Activated CD4-positive, alpha-beta T cell treated with anti-CD3 and anti-CD28 coated beads for 36 hours (primary cell): ENCODE measurements at regions of chr12 and their contacts with region 1.

Region 1: GRCh38 chr12:6195665-6196535 is 4.3 kb upstream of the CD9 start:
- DNase-seq: peak; percentile 87
- ATAC-seq: peak; percentile 75
- H3K4me3 Mint-ChIP-seq: no peak overlapping the region
- H3K27ac Mint-ChIP-seq: no peak overlapping the region
- H3K4me1 Mint-ChIP-seq: peaks cover 18% of the 10 kb centered on the region
- H3K27me3 Mint-ChIP-seq: peaks cover 11% of the 10 kb centered on the region

Region 2: GRCh38 chr12:5956995-5957394 is 238.9 kb before region 1 on chr12:
- CTCF ChIA-PET with region 1: no interaction called
- POLR2A ChIA-PET with region 1: no interaction called
- intact Hi-C with region 1: no loop called
- DNase-seq: no peak
- ATAC-seq: no peak
- H3K4me3 Mint-ChIP-seq: no peak overlapping the region
- H3K27ac Mint-ChIP-seq: no peak overlapping the region
- H3K4me1 Mint-ChIP-seq: no peaks in the 10 kb centered on the region
- H3K27me3 Mint-ChIP-seq: peaks cover 15% of the 10 kb centered on the region

Region 3: GRCh38 chr12:6062757-6063735 is 132.9 kb before region 1 on chr12:
- CTCF ChIA-PET with region 1: interaction called, 7 read pairs
- POLR2A ChIA-PET with region 1: no interaction called
- intact Hi-C with region 1: loop called (anchors 1 to 5 kb)
- DNase-seq: peak; percentile 75
- ATAC-seq: peak; percentile 90
- H3K4me3 Mint-ChIP-seq: no peak overlapping the region
- H3K27ac Mint-ChIP-seq: no peak overlapping the region
- H3K4me1 Mint-ChIP-seq: no peaks in the 10 kb centered on the region
- H3K27me3 Mint-ChIP-seq: peaks cover 4% of the 10 kb centered on the region

Region 4: GRCh38 chr12:6167327-6168259 is 28.3 kb before region 1 on chr12:
- CTCF ChIA-PET with region 1: interaction called, 3 read pairs
- POLR2A ChIA-PET with region 1: no interaction called
- intact Hi-C with region 1: loop called in 1 of 2 experiments (anchors 1 kb)
- DNase-seq: peak; percentile 84
- ATAC-seq: peak; percentile 89
- H3K4me3 Mint-ChIP-seq: peak overlapping the region; percentile 26
- H3K27ac Mint-ChIP-seq: peak overlapping the region; percentile 87
- H3K4me1 Mint-ChIP-seq: peaks cover 32% of the 10 kb centered on the region
- H3K27me3 Mint-ChIP-seq: no peaks in the 10 kb centered on the region

Region 5: DNA sequence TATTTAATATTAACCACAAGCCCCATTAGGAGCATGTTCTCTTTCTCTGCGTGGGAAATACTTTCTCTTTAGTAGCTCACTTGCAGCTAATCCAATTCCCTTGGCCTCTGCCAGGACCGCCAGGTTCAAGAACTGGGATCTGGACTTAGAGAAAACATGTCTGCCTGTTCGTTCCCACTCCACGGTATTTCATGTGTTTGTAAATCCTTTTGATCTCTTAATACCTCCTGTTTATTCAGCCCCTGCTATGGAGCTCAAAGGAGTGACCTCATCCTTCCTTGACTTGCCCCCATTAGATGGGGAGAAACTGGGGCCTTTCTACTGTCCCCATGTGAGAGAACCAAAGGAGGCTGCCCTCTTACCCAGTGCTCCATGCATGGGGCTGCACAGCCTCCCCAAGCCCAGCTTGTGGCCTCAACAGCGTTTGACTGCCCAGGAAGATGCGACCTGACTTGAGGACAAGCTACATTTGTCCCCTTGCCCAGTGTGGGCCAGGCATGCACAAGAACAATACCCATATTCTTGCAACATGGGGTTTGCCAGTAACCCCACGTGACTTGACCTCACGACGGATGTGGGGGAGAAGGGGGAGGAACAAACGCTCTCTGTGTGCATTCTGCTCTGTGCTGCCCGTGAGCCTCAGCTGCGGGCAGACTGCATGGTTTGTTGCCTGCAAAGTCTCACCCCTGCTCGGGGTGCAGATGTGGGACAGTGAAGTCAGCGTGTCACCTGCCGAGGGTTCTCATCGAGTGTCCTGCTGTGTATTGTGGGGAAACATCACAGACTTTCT is 34.6 kb after region 1 on chr12:
- CTCF ChIA-PET with region 1: interaction called, 10 read pairs
- POLR2A ChIA-PET with region 1: interaction called, 3 read pairs
- intact Hi-C with region 1: loop called in 1 of 2 experiments (anchors 2 kb)
- DNase-seq: peak; percentile 87
- ATAC-seq: peak; percentile 87
- H3K4me3 Mint-ChIP-seq: peak overlapping the region; percentile 49
- H3K27ac Mint-ChIP-seq: peak overlapping the region; percentile 84
- H3K4me1 Mint-ChIP-seq: peaks cover 33% of the 10 kb centered on the region
- H3K27me3 Mint-ChIP-seq: no peaks in the 10 kb centered on the region

Region 6: GRCh38 chr12:6285063-6285477 is 89.2 kb after region 1 on chr12:
- CTCF ChIA-PET with region 1: interaction called, 127 read pairs
- POLR2A ChIA-PET with region 1: no interaction called
- intact Hi-C with region 1: loop called (anchors 1 kb)
- DNase-seq: peak; percentile 77
- ATAC-seq: peak; percentile 92
- H3K4me3 Mint-ChIP-seq: no peak overlapping the region
- H3K27ac Mint-ChIP-seq: no peak overlapping the region
- H3K4me1 Mint-ChIP-seq: peaks cover 2% of the 10 kb centered on the region
- H3K27me3 Mint-ChIP-seq: peaks cover 7% of the 10 kb centered on the region

Region 7: DNA sequence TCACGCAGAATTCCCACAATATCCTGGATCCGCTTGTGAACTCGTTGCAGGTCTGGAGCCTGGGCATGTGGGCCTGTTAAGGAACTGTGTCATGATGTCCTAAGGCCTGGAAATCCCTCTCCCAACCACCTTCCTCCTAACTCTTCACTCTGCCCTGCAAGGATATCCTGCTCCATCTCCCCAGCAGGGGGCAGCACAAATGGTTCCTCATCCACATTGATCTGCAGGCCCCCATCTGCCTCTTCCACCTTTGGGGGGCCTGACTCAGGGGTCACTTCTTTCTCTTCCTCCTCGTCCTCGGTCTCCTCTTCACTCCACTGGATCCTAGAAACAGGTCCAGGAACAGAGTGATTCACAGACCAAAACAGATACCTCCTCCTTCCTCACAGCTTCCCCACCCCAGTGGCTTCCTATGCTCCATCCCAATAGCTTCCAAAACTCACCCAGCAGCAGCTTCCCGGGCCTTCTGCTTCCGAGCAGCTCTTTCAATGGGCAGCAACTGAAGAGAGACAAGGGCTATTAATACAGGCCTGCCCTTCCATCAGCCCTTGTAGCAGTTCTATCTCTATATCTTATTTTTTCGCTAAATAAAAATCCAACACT is 367.6 kb after region 1 on chr12:
- CTCF ChIA-PET with region 1: no interaction called
- POLR2A ChIA-PET with region 1: no interaction called
- intact Hi-C with region 1: no loop called
- DNase-seq: peak; percentile 82
- ATAC-seq: peak; percentile 37
- H3K4me3 Mint-ChIP-seq: no peak overlapping the region
- H3K27ac Mint-ChIP-seq: peak overlapping the region; percentile 17
- H3K4me1 Mint-ChIP-seq: peaks cover 40% of the 10 kb centered on the region
- H3K27me3 Mint-ChIP-seq: no peaks in the 10 kb centered on the region